Right ventricle myocardium inferior (tissue), 1 donor: ENCODE measurements at regions of chr22 and their contacts with region 1.

Region 1: GRCh38 chr22:23913661-23914353 is 19.6 kb downstream of the MIF start:
- DNase-seq: peak; percentile 100
- ATAC-seq: peak; percentile 100

Region 2: DNA sequence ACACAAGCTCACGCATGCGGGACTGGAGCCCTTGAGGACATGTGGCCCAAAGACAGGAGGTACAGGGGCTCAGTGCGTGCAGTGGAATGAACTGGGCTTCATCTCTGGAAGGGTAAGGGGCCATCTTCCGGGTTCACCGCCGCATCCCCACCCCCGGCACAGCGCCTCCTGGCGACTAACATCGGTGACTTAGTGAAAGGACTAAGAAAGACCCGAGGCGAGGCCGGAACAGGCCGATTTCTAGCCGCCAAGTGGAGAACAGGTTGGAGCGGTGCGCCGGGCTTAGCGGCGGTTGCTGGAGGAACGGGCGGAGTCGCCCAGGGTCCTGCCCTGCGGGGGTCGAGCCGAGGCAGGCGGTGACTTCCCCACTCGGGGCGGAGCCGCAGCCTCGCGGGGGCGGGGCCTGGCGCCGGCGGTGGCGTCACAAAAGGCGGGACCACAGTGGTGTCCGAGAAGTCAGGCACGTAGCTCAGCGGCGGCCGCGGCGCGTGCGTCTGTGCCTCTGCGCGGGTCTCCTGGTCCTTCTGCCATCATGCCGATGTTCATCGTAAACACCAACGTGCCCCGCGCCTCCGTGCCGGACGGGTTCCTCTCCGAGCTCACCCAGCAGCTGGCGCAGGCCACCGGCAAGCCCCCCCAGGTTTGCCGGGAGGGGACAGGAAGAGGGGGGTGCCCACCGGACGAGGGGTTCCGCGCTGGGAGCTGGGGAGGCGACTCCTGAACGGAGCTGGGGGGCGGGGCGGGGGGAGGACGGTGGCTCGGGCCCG is 19.7 kb before region 1 on chr22 and contains the start of gene MIF:
- intact Hi-C with region 1: loop called (anchors 2 kb)
- DNase-seq: peak; percentile 97
- ATAC-seq: peak; percentile 94
- total RNA-seq, gene MIF: 272 TPM

Region 3: GRCh38 chr22:23925020-23925606 is 11.3 kb after region 1 on chr22:
- intact Hi-C with region 1: no loop called
- DNase-seq: no peak
- ATAC-seq: no peak